ENCODE measurements at regions of chr20 and their contacts with region 1.

Region 1: GRCh38 chr20:45036044-45036755 is 64.7 kb downstream of the KCNS1 start:
- DNase-seq: peak; percentile 83
- ATAC-seq: peak; percentile 89
- H3K4me3 Mint-ChIP-seq: no peak overlapping the region
- H3K27ac Mint-ChIP-seq: peak overlapping the region; percentile 95
- H3K4me1 Mint-ChIP-seq: peaks cover 80% of the 10 kb centered on the region
- H3K27me3 Mint-ChIP-seq: no peaks in the 10 kb centered on the region

Region 2: DNA sequence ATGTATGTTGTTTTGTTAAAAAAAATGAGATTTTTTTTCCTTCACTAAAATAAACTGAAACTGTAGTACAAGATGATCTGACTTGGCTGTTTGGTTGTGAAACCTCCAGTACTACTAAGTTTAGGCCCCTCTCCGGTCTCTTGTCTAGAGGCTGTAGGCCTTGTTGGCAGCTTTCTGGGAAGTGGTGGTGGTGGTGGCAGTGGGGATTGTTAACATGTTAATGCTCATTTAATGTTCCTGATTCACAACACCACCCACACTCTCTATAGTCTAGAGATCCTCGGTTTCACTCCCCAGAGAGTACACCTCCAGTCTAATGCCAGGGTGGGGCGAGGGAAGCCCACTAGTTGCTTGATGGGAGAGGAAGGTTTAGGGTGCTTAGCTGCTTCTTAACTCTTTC is 45.8 kb before region 1 on chr20:
- CTCF ChIA-PET with region 1: no interaction called
- POLR2A ChIA-PET with region 1: no interaction called
- intact Hi-C with region 1: loop called in 1 of 2 experiments (anchors 5 kb)
- DNase-seq: peak; percentile 81
- ATAC-seq: peak; percentile 90
- H3K4me3 Mint-ChIP-seq: peak overlapping the region; percentile 70
- H3K27ac Mint-ChIP-seq: peak overlapping the region; percentile 94
- H3K4me1 Mint-ChIP-seq: peaks cover 78% of the 10 kb centered on the region
- H3K27me3 Mint-ChIP-seq: no peaks in the 10 kb centered on the region

Region 3: DNA sequence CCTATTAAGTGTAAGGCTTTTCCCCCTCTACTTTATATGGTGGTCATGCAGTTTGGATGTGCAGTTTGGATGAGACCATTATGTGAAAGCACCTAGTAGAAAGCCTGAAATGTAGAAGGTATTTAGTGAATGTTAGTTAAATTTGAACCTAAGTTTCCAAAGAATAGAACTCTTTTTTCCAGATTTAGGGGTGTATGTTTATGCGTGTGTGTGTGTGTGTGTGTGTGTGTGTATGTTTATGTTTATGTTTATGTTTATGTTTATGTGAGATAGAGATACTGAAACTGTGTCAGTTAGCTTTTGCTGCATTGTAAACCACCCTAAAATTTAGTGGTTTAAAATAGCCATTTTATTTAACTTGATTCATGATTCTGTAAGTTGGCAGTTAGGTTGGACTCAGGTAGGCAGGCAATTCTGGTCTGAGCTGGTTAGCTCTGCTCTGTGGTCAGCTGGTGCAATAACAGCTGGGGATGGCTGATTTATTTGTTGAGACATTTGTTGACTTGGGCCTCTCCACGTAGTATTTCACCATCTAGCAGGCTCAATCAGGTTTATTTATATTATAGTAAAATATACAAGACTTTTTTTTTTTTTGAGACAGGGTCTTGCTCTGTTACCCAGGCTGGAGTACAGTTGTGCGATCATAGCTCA is 15.8 kb before region 1 on chr20:
- CTCF ChIA-PET with region 1: interaction called, 4 read pairs
- POLR2A ChIA-PET with region 1: no interaction called
- intact Hi-C with region 1: loop called in 1 of 2 experiments (anchors 2 kb)
- DNase-seq: no peak
- ATAC-seq: no peak
- H3K4me3 Mint-ChIP-seq: no peak overlapping the region
- H3K27ac Mint-ChIP-seq: peak overlapping the region; percentile 20
- H3K4me1 Mint-ChIP-seq: peaks cover 65% of the 10 kb centered on the region
- H3K27me3 Mint-ChIP-seq: no peaks in the 10 kb centered on the region

Region 4: DNA sequence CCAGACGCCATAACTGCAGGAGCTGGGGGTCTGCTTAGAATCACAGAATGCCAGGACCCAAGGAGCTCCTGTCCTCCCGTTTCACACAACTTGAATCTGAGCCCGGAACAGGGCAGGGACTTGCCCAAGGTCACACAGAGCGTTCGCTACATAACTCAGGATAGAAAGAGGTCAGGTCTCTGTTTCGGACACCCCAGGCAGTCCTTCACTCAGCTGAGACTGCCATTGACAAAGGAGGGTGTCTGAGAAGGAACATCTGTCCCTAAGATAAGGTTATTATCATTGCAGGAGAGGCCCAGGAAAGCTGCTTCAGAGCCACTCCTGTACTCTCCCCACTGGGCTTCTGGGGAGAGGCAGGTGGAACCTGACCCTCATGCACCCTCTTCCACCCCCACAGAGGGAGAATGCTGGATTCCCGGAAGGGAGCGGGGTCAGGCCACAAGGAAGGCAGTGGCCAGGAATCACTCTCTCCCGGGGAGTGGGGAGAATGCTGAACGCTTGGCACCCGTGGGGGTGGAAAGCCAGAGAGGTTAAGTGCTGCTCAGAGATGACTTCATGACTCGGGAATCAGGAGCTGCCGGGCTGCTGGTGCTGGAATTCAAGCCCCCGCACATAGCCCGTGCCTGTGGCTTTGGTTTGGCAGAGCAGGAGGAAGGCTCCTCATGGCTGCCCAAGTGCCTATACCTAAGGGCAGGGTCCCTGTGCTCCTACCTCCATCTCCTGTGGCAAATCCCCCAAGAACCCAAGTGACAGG is 301.3 kb after region 1 on chr20:
- CTCF ChIA-PET with region 1: no interaction called
- POLR2A ChIA-PET with region 1: no interaction called
- intact Hi-C with region 1: no loop called
- DNase-seq: no peak
- ATAC-seq: no peak
- H3K4me3 Mint-ChIP-seq: no peak overlapping the region
- H3K27ac Mint-ChIP-seq: no peak overlapping the region
- H3K4me1 Mint-ChIP-seq: no peaks in the 10 kb centered on the region
- H3K27me3 Mint-ChIP-seq: no peaks in the 10 kb centered on the region